BJ (cell line): ENCODE measurements at regions of chr11 and their contacts with region 1.

Region 1: DNA sequence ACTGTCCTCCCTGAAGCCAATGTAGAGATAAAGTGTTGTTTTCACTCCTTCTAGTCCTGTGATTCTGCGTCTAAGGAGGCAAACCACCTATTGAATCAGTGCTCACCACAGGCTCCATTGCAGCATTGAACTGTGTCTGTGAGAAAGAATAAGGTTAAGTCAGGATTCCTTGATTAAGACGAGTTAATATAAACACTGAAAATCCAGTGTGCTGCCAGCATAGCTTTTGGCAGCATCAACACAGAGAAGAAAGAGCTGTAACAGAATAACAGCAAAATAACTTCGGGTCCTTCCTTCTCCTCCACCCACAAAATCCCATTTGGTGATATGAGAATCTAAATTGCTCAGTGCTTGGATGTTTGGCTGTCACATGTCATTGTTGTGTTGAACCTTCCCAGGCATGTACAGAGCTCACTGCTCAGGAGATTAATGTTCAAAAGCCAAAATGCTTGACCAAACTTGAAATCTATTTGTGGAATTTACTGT is 185.2 kb upstream of the DDI1 start:
- DNase-seq: no peak
- H3K4me3 ChIP-seq: no peak overlapping the region
- H3K27me3 ChIP-seq: no peaks in the 10 kb centered on the region
- CTCF ChIP-seq: no peak

Region 2: DNA sequence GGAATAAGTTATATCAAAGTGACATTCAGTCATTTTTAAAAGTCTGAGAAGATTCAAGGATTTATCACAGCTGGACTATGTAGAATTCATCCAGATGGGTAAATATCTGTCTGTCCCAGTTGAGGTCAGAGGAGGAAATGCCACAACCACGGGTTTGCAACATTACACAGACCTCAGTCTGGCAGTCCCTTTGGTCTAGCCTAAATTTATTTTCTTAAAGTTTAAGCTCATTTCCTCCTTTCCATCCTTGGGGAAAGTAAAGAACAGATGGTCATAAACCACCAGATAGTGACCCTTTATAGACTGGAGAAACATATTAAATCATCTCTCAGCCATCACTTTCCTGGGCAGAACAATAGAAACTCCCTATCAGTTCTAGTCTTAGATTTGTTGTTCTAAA is 53.2 kb before region 1 on chr11:
- CTCF ChIA-PET with region 1: no interaction called
- POLR2A ChIA-PET with region 1: no interaction called
- DNase-seq: peak; percentile 57
- H3K4me3 ChIP-seq: no peak overlapping the region
- H3K27me3 ChIP-seq: no peaks in the 10 kb centered on the region
- CTCF ChIP-seq: no peak

Region 3: GRCh38 chr11:103862094-103862801 is 11.0 kb after region 1 on chr11:
- CTCF ChIA-PET with region 1: no interaction called
- POLR2A ChIA-PET with region 1: interaction called, 11 read pairs
- DNase-seq: no peak
- H3K4me3 ChIP-seq: no peak overlapping the region
- H3K27me3 ChIP-seq: no peaks in the 10 kb centered on the region
- CTCF ChIP-seq: no peak

Region 4: GRCh38 chr11:103881584-103881983 is 30.4 kb after region 1 on chr11:
- CTCF ChIA-PET with region 1: no interaction called
- POLR2A ChIA-PET with region 1: interaction called, 10 read pairs
- DNase-seq: no peak
- H3K4me3 ChIP-seq: no peak overlapping the region
- H3K27me3 ChIP-seq: no peaks in the 10 kb centered on the region
- CTCF ChIP-seq: no peak

Region 5: DNA sequence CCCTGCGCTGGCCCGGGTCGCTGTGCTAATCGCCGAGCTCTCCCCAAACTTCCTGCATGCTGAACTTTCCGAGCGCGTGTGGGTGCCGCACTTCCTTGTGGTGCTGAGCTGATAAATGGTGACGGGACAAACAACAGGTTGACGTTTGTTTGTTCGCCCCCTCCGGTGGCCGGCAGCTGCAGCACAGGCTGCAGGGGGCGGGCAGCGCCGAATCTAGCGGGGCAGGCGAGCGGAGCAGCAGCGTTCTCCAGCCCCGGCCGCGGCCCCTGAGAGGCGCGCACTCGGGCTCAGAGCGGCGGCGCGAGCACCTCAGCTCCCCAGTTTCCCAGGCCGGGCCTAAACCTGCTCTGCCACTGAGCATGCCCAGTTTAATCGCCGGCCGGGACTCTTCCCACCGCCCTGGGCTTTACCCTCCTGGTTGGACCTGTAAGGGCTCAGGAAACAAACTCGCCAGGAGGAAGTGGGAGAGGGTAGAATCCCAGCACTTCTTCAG is 312.9 kb after region 1 on chr11 and contains the start of gene PDGFD:
- CTCF ChIA-PET with region 1: no interaction called
- POLR2A ChIA-PET with region 1: no interaction called
- DNase-seq: no peak
- H3K4me3 ChIP-seq: peak within 1 kb of the TSS; percentile 59
- H3K27me3 ChIP-seq: peaks cover 2% of the 10 kb centered on the region; the same call in 1 of the 2 replicates
- CTCF ChIP-seq: peak; percentile 46
- polyA plus RNA-seq, gene PDGFD: 0.72 and 1.2 TPM in 2 replicates